IMR-90 (cell line): ENCODE measurements at regions of chr1 and their contacts with region 1.

Region 1: DNA sequence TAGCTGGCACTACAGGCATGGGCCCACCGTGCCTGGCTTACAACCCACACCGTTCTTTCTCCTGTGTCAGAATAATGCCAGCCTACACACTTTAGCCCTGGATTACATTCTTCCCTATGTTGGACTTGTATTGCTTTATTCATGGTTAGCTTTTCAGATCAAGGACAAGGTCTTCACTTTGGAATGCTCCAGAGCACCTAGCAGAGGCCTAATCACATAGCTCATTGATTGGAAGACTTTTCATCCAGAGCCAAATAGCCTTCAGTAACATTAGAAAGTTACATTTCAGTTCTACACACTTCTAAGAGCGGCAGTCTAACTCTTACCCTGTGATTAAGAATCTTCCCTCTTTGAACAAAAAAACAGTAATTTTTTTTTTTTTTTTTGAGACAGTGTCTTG is 29.4 kb upstream of the ZFYVE9 start:
- DNase-seq: no peak
- ATAC-seq: no peak
- H3K4me3 ChIP-seq: no peak overlapping the region
- H3K27ac ChIP-seq: no peak overlapping the region
- H3K4me1 ChIP-seq: no peaks in the 10 kb centered on the region
- H3K27me3 ChIP-seq: no peaks in the 10 kb centered on the region; the same call in 1 of the 2 replicates
- CTCF ChIP-seq: no peak
- POLR2A ChIP-seq: no peak
- RAD21 ChIP-seq: no peak

Region 2: DNA sequence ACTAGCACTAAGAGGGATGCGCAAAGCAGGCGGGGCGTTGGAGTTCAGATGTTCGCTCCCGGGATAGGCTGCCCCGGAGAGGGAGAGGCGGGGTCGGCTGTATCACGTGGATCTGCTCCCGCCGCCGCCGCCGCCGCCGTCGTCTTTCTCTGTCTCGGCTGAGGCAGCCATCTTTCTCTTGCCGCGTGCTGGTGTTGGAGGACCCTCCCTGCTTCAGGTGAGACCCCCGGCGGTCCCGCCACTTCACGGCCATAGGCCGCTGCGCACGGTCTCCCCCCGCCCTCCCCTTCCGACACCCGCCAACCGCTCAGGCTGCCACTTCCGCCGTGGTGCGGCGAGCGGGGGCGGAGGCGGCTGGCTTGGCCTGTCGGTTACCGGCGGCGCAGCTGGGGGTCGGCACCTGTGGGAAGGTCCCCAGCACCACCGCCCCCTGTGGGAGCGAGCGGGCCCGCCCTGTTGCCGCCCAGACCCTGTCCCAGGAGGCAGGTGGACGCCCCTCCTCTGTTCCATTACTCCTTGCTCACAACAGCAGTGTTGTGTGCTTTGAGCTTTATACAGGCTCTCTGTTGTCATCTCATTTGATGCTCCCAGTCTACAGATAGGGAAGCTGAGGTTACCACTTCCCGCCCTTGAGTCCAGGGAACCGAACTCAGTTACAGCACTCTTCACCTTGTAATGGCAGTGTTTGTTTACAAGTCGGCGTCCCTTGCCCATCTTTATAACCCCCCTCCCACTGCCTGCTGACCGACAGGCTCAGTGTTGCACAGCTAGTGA is 56.1 kb before region 1 on chr1 and contains the start of gene BTF3L4:
- CTCF ChIA-PET with region 1: no interaction called
- POLR2A ChIA-PET with region 1: interaction called, 36 read pairs
- dilution Hi-C with region 1: no loop called
- in situ Hi-C with region 1: no loop called
- intact Hi-C with region 1: no loop called
- DNase-seq: peak; percentile 89
- ATAC-seq: peak; percentile 90
- H3K4me3 ChIP-seq: peak within 1 kb of the TSS; percentile 84
- H3K27ac ChIP-seq: peak within 1 kb of the TSS; percentile 94
- H3K4me1 ChIP-seq: peaks cover 4% of the 10 kb centered on the region; the same call in 1 of the 2 replicates
- H3K27me3 ChIP-seq: no peaks in the 10 kb centered on the region
- CTCF ChIP-seq: no peak
- POLR2A ChIP-seq: peak; percentile 37; the same call in 1 of the 2 replicates
- RAD21 ChIP-seq: no peak
- total RNA-seq, gene BTF3L4: 41.2 and 46.4 TPM in 2 replicates